Kidney (tissue), 22 donors: ENCODE measurements at regions of chr10 and their contacts with region 1.

Region 1: GRCh38 chr10:30392564-30392990 is 41.4 kb upstream of the MAP3K8 start:
- DNase-seq: peak; percentile 83 to 88 (median 83)
- H3K4me3 ChIP-seq: peak overlapping the region; percentile 38 to 48 (median 39)
- H3K27ac ChIP-seq: no peak overlapping the region
- H3K4me1 ChIP-seq: peaks cover 0 to 3% (median 0%) of the 10 kb centered on the region in 3 donors
- H3K27me3 ChIP-seq: no peaks in the 10 kb centered on the region
- CTCF ChIP-seq: peak; percentile 88

Region 2: DNA sequence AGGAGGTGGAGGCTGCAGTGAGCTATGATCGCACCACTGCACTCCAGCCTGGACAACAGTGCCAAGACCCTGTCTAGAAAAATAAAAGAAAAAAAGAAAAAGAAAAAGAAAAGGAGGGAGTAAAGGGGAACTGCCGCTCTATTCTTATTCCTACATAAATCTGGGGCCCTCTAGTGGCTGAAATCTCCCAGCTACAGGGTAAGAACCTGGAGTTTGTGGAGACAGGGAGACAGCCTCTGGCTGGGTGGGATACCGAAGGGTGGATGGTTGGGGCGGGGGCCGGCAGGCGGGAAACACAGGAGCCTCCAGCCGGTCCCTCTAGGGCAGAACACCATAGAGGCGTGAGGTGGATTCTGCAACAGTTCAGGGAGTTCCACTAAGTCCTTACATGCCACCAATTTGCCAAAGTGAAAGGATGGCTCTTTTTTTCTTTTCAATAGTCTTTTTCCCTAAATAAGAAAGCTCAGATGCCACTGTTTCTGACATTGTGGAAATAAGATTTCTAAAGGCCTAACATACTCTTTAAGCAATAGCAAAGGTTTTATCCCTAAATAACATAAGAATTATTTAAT is 875.1 kb before region 1 on chr10:
- intact Hi-C with region 1: no loop called
- DNase-seq: peak in 2 of 5 donors; percentile 40 to 55
- H3K4me3 ChIP-seq: no peak overlapping the region
- H3K27ac ChIP-seq: no peak overlapping the region
- H3K4me1 ChIP-seq: peaks cover under 1 to 11% (median 9%) of the 10 kb centered on the region in 3 donors
- H3K27me3 ChIP-seq: no peaks in the 10 kb centered on the region
- CTCF ChIP-seq: peak; percentile 39

Region 3: GRCh38 chr10:30348378-30348776 is 44.2 kb before region 1 on chr10:
- intact Hi-C with region 1: no loop called
- DNase-seq: peak in 1 of 5 donors; percentile 13
- H3K4me3 ChIP-seq: peak overlapping the region; percentile 93 to 100 (median 95)
- H3K27ac ChIP-seq: peak overlapping the region in 1 of 2 donors; percentile 92
- H3K4me1 ChIP-seq: peaks cover 0 to 14% (median 5%) of the 10 kb centered on the region in 3 donors
- H3K27me3 ChIP-seq: no peaks in the 10 kb centered on the region
- CTCF ChIP-seq: no peak

Region 4: DNA sequence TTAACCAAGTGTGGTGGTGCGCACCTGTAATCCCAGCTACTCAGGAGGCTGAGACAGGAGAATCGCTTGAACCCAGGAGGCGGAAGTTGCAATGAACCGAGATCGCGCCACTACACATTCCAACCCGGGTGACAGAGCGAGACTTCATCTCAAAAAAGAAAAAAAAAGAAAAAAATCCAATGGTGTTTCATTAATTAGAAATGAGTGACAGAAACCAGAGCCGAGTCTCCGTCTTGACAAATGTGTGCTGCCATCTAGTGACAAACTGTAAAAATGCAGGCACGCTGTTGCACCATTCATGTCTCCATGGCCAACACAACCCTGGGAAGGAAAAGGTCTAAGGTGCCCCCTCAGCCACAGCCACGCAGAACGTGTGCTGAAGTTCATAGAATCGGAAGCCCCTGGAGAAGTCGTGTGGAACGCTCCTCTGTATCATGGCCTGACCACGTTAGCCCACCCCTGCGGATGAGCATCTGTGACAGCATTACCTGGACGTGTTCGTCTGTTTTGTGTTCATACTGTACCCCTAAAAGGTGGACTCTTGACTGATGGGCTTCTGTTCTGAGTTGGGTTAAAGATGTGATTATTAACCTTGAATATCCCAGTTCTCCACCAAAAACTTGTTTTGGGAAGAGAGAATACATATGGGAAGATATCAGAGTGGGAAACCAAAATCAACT is 142.0 kb after region 1 on chr10:
- intact Hi-C with region 1: loop called (anchors 10 kb)
- DNase-seq: peak in 4 of 5 donors; percentile 75 to 87 (median 80)
- H3K4me3 ChIP-seq: no peak overlapping the region
- H3K27ac ChIP-seq: no peak overlapping the region
- H3K4me1 ChIP-seq: peaks cover 0 to 5% (median 0%) of the 10 kb centered on the region in 3 donors
- H3K27me3 ChIP-seq: no peaks in the 10 kb centered on the region
- CTCF ChIP-seq: peak; percentile 97

Region 5: GRCh38 chr10:30591249-30591670 is 198.7 kb after region 1 on chr10:
- intact Hi-C with region 1: loop called (anchors 5 kb)
- DNase-seq: peak in 4 of 5 donors; percentile 52 to 84 (median 69)
- H3K4me3 ChIP-seq: no peak overlapping the region
- H3K27ac ChIP-seq: no peak overlapping the region
- H3K4me1 ChIP-seq: no peaks in the 10 kb centered on the region
- H3K27me3 ChIP-seq: no peaks in the 10 kb centered on the region
- CTCF ChIP-seq: peak; percentile 74

Region 6: GRCh38 chr10:30812018-30812851 is 419.7 kb after region 1 on chr10:
- intact Hi-C with region 1: no loop called
- DNase-seq: peak in 1 of 5 donors; percentile 85
- H3K4me3 ChIP-seq: no peak overlapping the region
- H3K27ac ChIP-seq: peak overlapping the region in 1 of 2 donors; percentile 29
- H3K4me1 ChIP-seq: peaks cover 0 to 23% (median 6%) of the 10 kb centered on the region in 3 donors
- H3K27me3 ChIP-seq: no peaks in the 10 kb centered on the region
- CTCF ChIP-seq: no peak